ENCODE measurements at regions of chr5 and their contacts with region 1.

Region 1: GRCh38 chr5:133051580-133052332 is at the start of gene HSPA4:
- DNase-seq: peak; percentile 98 to 99 (median 98)
- H3K4me3 ChIP-seq: peak within 1 kb of the TSS; percentile 71 to 92 (median 91)
- H3K4me3 Mint-ChIP-seq: peak within 1 kb of the TSS; percentile 91 to 95
- H3K27ac ChIP-seq: peak within 1 kb of the TSS; percentile 98 to 99
- H3K27ac Mint-ChIP-seq: peak within 1 kb of the TSS; percentile 98 to 100 (median 99)
- H3K4me1 ChIP-seq: peaks cover 19 to 25% of the 10 kb centered on the region in 2 donors
- H3K4me1 Mint-ChIP-seq: peaks cover 29% of the 10 kb centered on the region
- H3K27me3 ChIP-seq: no peaks in the 10 kb centered on the region
- H3K27me3 Mint-ChIP-seq: peaks cover 0 to 1% (median 0%) of the 10 kb centered on the region in 3 donors
- CTCF ChIP-seq: no peak
- polyA plus RNA-seq, gene HSPA4: 15.7 to 52.0 (median 27.7) TPM

Region 2: DNA sequence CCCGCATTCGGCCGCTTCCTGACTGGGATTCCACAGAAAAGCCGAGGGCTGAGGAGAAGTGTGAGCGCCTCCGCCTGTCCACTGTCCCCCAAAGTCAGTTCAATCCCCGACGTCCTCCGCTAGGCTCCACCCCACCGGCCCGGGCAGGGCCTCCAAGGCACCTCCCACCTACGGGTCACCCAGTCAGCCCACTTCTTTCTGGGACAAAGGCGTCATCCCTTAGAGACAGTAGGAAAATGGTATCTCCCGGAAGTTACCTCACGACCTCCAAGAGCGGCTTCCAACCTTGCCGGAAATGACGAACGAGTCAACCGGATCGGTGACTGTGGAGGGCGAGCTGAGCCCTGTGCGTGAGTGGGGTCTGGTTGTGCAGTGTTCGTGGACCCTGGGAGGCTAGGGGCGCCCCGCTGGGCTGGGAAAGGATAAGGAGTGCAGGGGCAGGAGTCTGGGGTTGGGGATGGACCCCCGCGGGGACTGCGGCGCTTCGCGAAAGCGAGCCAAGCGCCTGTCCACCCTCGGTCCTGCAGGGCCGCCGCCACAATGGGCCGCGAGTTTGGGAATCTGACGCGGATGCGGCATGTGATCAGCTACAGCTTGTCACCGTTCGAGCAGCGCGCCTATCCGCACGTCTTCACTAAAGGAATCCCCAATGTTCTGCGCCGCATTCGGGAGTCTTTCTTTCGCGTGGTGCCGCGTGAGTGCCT is 185.3 kb before region 1 on chr5 and contains the starts of genes GDF9 and UQCRQ:
- intact Hi-C with region 1: loop called in 1 of 2 experiments (anchors 5 kb)
- DNase-seq: peak; percentile 99 to 100 (median 100)
- H3K4me3 ChIP-seq: peak within 1 kb of the TSS; percentile 47 to 87 (median 78)
- H3K4me3 Mint-ChIP-seq: peak within 1 kb of the TSS; percentile 96 to 99
- H3K27ac ChIP-seq: peak within 1 kb of the TSS; percentile 92 to 97
- H3K27ac Mint-ChIP-seq: peak within 1 kb of the TSS; percentile 94 to 100 (median 99)
- H3K4me1 ChIP-seq: peaks cover 14 to 33% of the 10 kb centered on the region in 2 donors
- H3K4me1 Mint-ChIP-seq: peaks cover 19% of the 10 kb centered on the region
- H3K27me3 ChIP-seq: no peaks in the 10 kb centered on the region
- H3K27me3 Mint-ChIP-seq: peaks cover 3 to 4% (median 4%) of the 10 kb centered on the region in 3 donors
- CTCF ChIP-seq: no peak
- polyA plus RNA-seq, gene GDF9: 0.55 TPM in 1 of 3 donors, not detected in the others
- polyA plus RNA-seq, gene UQCRQ: 81.6 to 880 (median 879) TPM

Region 3: GRCh38 chr5:133086366-133086875 is 34.7 kb after region 1 on chr5:
- intact Hi-C with region 1: no loop called
- DNase-seq: no peak
- H3K4me3 ChIP-seq: no peak overlapping the region
- H3K4me3 Mint-ChIP-seq: no peak overlapping the region
- H3K27ac ChIP-seq: no peak overlapping the region
- H3K27ac Mint-ChIP-seq: peak overlapping the region in 1 of 7 donors; percentile 48
- H3K4me1 ChIP-seq: no peaks in the 10 kb centered on the region
- H3K4me1 Mint-ChIP-seq: no peaks in the 10 kb centered on the region
- H3K27me3 ChIP-seq: no peaks in the 10 kb centered on the region
- H3K27me3 Mint-ChIP-seq: no peaks in the 10 kb centered on the region
- CTCF ChIP-seq: no peak

Region 4: GRCh38 chr5:133292300-133292699 is 240.5 kb after region 1 on chr5:
- intact Hi-C with region 1: no loop called
- DNase-seq: no peak
- H3K4me3 ChIP-seq: no peak overlapping the region
- H3K4me3 Mint-ChIP-seq: no peak overlapping the region
- H3K27ac ChIP-seq: no peak overlapping the region
- H3K27ac Mint-ChIP-seq: no peak overlapping the region
- H3K4me1 ChIP-seq: no peaks in the 10 kb centered on the region
- H3K4me1 Mint-ChIP-seq: no peaks in the 10 kb centered on the region
- H3K27me3 ChIP-seq: no peaks in the 10 kb centered on the region
- H3K27me3 Mint-ChIP-seq: no peaks in the 10 kb centered on the region
- CTCF ChIP-seq: no peak

Measured in CD14-positive monocyte (primary cell).